ENCODE measurements at regions of chr14 and their contacts with region 1.

Region 1: GRCh38 chr14:81453166-81453766 is 53.1 kb upstream of the STON2 start:
- DNase-seq: peak in 1 of 2 experiments; percentile 25
- H3K4me3 ChIP-seq: no peak overlapping the region
- H3K27ac ChIP-seq: no peak overlapping the region
- H3K4me1 ChIP-seq: no peaks in the 10 kb centered on the region
- H3K27me3 ChIP-seq: no peaks in the 10 kb centered on the region
- CTCF ChIP-seq: peak; percentile 85

Region 2: GRCh38 chr14:81269100-81269978 is 183.9 kb before region 1 on chr14:
- CTCF ChIA-PET with region 1: interaction called, 9 read pairs
- POLR2A ChIA-PET with region 1: no interaction called
- intact Hi-C with region 1: loop called (anchors 1 kb)
- DNase-seq: peak; percentile 11 to 53
- H3K4me3 ChIP-seq: no peak overlapping the region
- H3K27ac ChIP-seq: no peak overlapping the region
- H3K4me1 ChIP-seq: peaks cover 10% of the 10 kb centered on the region
- H3K27me3 ChIP-seq: no peaks in the 10 kb centered on the region
- CTCF ChIP-seq: peak; percentile 83